Naive thymus-derived CD4-positive, alpha-beta T cell (primary cell): ENCODE measurements at regions of chr4 and their contacts with region 1.

Region 1: DNA sequence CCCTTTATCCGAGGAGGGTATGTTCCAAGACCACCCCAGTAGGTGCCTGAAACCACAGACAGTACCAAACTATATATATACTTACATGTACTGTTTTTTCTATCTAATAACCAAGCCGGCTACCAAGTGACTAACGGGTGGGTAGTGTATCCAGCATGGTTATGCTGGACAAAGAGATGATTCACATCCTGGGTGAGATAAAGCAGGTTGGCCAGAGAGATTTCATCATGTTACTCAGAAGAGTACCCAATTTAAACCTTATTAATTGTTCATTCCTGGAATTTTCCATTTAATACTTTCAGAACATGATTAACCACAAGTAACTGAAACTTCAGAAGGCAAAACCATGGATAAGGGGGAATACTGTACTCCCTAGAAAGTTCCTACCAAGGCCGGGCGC is 46.5 kb downstream of the RFC1 start:
- DNase-seq: no peak
- ATAC-seq: no peak
- H3K4me3 ChIP-seq: no peak overlapping the region
- H3K4me3 Mint-ChIP-seq: no peak overlapping the region
- H3K27ac ChIP-seq: no peak overlapping the region
- H3K27ac Mint-ChIP-seq: no peak overlapping the region
- H3K4me1 ChIP-seq: no peaks in the 10 kb centered on the region
- H3K4me1 Mint-ChIP-seq: no peaks in the 10 kb centered on the region
- H3K27me3 ChIP-seq: no peaks in the 10 kb centered on the region
- H3K27me3 Mint-ChIP-seq: no peaks in the 10 kb centered on the region

Region 2: DNA sequence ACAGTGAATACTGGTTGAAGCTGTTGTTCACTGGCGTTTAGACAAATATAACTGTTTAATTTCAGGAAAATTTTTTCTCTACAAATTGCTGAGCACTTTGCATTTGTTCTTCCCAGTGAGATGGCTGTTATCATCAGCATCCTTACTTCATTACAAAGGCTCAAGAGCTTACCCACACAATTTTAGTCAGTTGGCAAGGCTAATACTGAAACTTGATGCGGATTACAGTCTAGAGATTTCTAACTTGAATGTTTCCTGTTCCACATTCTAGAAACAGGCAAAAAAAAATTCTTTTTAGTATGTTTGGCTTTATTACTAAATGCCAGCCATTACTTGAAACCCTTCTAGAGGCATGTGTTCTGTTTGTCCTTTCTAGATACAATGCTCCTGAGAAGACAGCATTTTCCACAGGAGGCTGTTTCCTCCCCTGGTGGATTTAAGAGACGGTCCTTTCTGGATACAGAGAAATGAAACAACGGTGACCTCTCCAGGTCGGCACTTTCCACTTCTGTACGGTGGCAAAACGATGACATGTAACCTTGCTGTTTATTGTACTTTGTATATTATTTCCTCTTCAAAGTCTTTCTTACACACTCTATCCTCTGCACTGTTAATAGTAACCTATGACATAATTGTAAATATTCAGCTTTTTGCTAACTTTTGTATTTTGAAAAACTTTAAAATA is 34.4 kb before region 1 on chr4:
- CTCF ChIA-PET with region 1: no interaction called
- POLR2A ChIA-PET with region 1: no interaction called
- intact Hi-C with region 1: no loop called
- DNase-seq: no peak
- ATAC-seq: no peak
- H3K4me3 ChIP-seq: no peak overlapping the region
- H3K4me3 Mint-ChIP-seq: no peak overlapping the region
- H3K27ac ChIP-seq: no peak overlapping the region
- H3K27ac Mint-ChIP-seq: no peak overlapping the region
- H3K4me1 ChIP-seq: no peaks in the 10 kb centered on the region
- H3K4me1 Mint-ChIP-seq: peaks cover 0 to 10% (median 0%) of the 10 kb centered on the region in 7 donors
- H3K27me3 ChIP-seq: no peaks in the 10 kb centered on the region
- H3K27me3 Mint-ChIP-seq: no peaks in the 10 kb centered on the region

Region 3: GRCh38 chr4:39337841-39338240 is 18.2 kb after region 1 on chr4:
- CTCF ChIA-PET with region 1: no interaction called
- POLR2A ChIA-PET with region 1: no interaction called
- intact Hi-C with region 1: loop called in 1 of 2 experiments (anchors 2 kb)
- DNase-seq: no peak
- ATAC-seq: no peak
- H3K4me3 ChIP-seq: no peak overlapping the region
- H3K4me3 Mint-ChIP-seq: no peak overlapping the region
- H3K27ac ChIP-seq: no peak overlapping the region
- H3K27ac Mint-ChIP-seq: no peak overlapping the region
- H3K4me1 ChIP-seq: no peaks in the 10 kb centered on the region
- H3K4me1 Mint-ChIP-seq: peaks cover 17 to 69% (median 63%) of the 10 kb centered on the region in 7 donors
- H3K27me3 ChIP-seq: no peaks in the 10 kb centered on the region
- H3K27me3 Mint-ChIP-seq: no peaks in the 10 kb centered on the region

Region 4: DNA sequence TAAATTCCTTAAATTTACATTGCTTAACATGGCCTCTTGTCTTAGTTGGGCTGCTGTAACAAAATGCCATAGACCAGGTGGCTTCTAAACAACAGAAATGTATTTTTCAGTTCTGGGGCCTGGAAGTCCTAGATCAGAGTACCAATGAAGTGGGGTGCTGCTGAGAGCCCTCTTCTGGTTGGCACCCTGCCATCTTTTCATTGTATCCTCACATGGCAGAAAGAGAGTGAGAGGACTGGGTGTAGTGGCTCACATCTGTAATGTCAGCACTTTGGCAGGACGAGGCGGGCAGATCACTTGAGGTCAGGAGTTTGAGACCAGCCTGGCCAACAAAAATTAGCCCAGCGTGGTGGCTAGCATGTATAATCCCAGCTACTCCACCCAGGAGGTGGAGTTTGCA is 75.0 kb after region 1 on chr4:
- CTCF ChIA-PET with region 1: no interaction called
- POLR2A ChIA-PET with region 1: no interaction called
- intact Hi-C with region 1: no loop called
- DNase-seq: no peak
- ATAC-seq: no peak
- H3K4me3 ChIP-seq: no peak overlapping the region
- H3K4me3 Mint-ChIP-seq: no peak overlapping the region
- H3K27ac ChIP-seq: no peak overlapping the region
- H3K27ac Mint-ChIP-seq: no peak overlapping the region
- H3K4me1 ChIP-seq: no peaks in the 10 kb centered on the region
- H3K4me1 Mint-ChIP-seq: no peaks in the 10 kb centered on the region
- H3K27me3 ChIP-seq: no peaks in the 10 kb centered on the region
- H3K27me3 Mint-ChIP-seq: no peaks in the 10 kb centered on the region

Region 5: DNA sequence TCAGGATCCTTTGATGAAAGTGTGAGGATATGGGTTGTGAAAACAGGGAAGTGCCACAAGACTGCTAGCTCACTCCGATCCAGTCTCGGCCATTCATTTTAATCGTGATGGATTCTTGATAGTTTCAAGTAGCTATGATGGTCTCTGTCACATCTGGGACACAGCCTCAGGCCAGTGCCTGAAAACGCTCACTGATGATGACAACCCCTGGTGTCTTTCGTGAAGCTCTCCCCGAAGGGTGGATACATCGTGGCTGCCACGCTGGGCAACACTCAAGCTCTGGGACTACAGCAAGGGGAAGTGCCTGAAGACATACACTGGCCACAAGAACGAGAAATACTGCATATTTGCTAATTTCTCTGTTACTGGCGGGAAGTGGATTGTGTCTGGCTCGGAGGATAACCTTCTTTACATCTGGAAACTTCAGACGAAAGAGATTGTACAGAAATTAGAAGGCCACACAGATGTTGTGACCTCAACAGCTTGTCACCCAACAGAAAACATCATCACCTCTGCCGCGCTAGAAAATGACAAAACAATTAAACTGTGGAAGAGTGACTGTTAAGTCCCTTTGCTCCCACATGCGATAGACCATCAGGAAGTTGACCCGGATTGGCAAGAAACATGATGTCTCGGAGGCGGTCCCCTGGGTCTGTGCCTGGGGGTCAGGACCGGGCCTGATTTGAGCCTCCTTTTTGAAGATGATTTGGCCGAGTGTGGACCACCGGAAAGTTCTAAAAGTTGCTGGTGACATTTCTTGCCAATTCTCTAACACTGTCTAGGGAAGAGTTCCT is 161.4 kb after region 1 on chr4:
- CTCF ChIA-PET with region 1: no interaction called
- POLR2A ChIA-PET with region 1: no interaction called
- intact Hi-C with region 1: no loop called
- DNase-seq: no peak
- ATAC-seq: peak; percentile 29
- H3K4me3 ChIP-seq: no peak overlapping the region
- H3K4me3 Mint-ChIP-seq: no peak overlapping the region
- H3K27ac ChIP-seq: no peak overlapping the region
- H3K27ac Mint-ChIP-seq: peak overlapping the region in 1 of 9 donors; percentile 47
- H3K4me1 ChIP-seq: no peaks in the 10 kb centered on the region
- H3K4me1 Mint-ChIP-seq: no peaks in the 10 kb centered on the region
- H3K27me3 ChIP-seq: no peaks in the 10 kb centered on the region
- H3K27me3 Mint-ChIP-seq: no peaks in the 10 kb centered on the region